Activated T-helper 1 cell treated with anti-CD3 and anti-CD28 coated beads, Interleukin-12 subunit alpha, Interleukin-12 subunit beta, Interleukin-2, Interleukin-4 antibody, amounts not matched to agents 30 ng/mL and 10 ng/mL and 1 ng/mL, durations not matched to agents 14 hours and 24 hours and 36 hours (primary cell): ENCODE measurements at regions of chr12 and their contacts with region 1.

Region 1: DNA sequence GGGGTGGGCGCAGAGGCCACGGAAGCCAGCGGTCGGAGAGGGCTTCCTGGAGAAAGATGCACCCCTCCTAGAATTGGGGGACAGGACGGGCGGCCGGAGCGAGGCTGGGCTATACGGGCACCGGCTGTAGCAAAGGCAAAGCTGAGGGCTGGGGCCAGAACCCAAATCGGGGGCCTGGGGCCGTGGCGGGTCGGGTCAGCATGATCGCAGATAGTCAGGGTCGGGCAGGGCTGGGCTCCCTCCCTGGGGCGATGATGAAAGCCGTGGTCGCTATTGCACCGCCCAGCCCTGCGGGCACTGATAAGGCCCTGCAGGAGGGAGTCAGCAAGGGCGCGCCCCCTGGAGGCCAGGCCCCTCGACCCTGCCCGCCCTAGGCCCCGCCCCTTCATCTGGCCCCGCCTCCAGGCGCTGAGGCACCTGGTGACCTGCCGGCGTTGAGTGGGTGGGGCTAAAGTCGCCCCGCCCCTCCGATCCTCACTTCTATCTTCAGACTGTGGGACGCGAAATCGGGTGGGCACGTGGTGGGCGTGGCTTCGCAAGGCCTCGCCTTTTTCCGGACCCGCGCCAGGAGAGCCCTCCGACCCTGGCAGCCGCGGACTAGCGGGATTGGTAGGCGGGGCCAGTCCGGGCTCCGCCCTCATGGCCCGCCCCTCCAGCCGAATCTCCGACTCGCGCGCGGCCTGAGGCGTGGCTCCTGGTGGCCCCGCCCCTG is 418 bp upstream of the SH2B3 start:
- DNase-seq: peak; percentile 95
- H3K4me3 Mint-ChIP-seq: peak overlapping the region; percentile 93
- H3K27ac Mint-ChIP-seq: peak overlapping the region; percentile 99
- H3K4me1 Mint-ChIP-seq: peaks cover 44% of the 10 kb centered on the region
- H3K27me3 Mint-ChIP-seq: peaks cover 10% of the 10 kb centered on the region

Region 2: GRCh38 chr12:110583137-110584059 is 821.9 kb before region 1 on chr12 and contains the start of gene PPTC7:
- intact Hi-C with region 1: loop called (anchors 10 kb)
- DNase-seq: peak; percentile 93
- H3K4me3 Mint-ChIP-seq: peak within 1 kb of the TSS; percentile 95
- H3K27ac Mint-ChIP-seq: peak within 1 kb of the TSS; percentile 96
- H3K4me1 Mint-ChIP-seq: peaks cover 61% of the 10 kb centered on the region
- H3K27me3 Mint-ChIP-seq: peaks cover 3% of the 10 kb centered on the region
- total RNA-seq, gene PPTC7: 57.9 and 59.1 TPM in 2 replicates

Region 3: GRCh38 chr12:111368788-111369495 is 36.4 kb before region 1 on chr12 and contains the start of gene PHETA1:
- intact Hi-C with region 1: loop called (anchors 2 kb)
- DNase-seq: peak; percentile 79
- H3K4me3 Mint-ChIP-seq: peak within 1 kb of the TSS; percentile 80
- H3K27ac Mint-ChIP-seq: no peak within 1 kb of the TSS
- H3K4me1 Mint-ChIP-seq: peaks cover 17% of the 10 kb centered on the region
- H3K27me3 Mint-ChIP-seq: peaks cover 18% of the 10 kb centered on the region
- total RNA-seq, gene PHETA1: 2.7 and 4.2 TPM in 2 replicates

Region 4: GRCh38 chr12:111451649-111452129 is 46.4 kb after region 1 on chr12:
- intact Hi-C with region 1: loop called (anchors 1 kb)
- DNase-seq: peak; percentile 21
- H3K4me3 Mint-ChIP-seq: peak overlapping the region; percentile 15
- H3K27ac Mint-ChIP-seq: no peak overlapping the region
- H3K4me1 Mint-ChIP-seq: peaks cover 50% of the 10 kb centered on the region
- H3K27me3 Mint-ChIP-seq: no peaks in the 10 kb centered on the region

Region 5: GRCh38 chr12:111599459-111600204 is 194.3 kb after region 1 on chr12:
- intact Hi-C with region 1: loop called (anchors 2 kb)
- DNase-seq: peak; percentile 80
- H3K4me3 Mint-ChIP-seq: peak overlapping the region; percentile 79
- H3K27ac Mint-ChIP-seq: peak overlapping the region; percentile 68
- H3K4me1 Mint-ChIP-seq: peaks cover 29% of the 10 kb centered on the region
- H3K27me3 Mint-ChIP-seq: no peaks in the 10 kb centered on the region

Region 6: GRCh38 chr12:112382232-112382796 is 977.0 kb after region 1 on chr12 and contains the start of gene HECTD4:
- intact Hi-C with region 1: loop called (anchors 10 kb)
- DNase-seq: peak; percentile 92
- H3K4me3 Mint-ChIP-seq: peak within 1 kb of the TSS; percentile 95
- H3K27ac Mint-ChIP-seq: peak within 1 kb of the TSS; percentile 91
- H3K4me1 Mint-ChIP-seq: peaks cover 31% of the 10 kb centered on the region
- H3K27me3 Mint-ChIP-seq: peaks cover under 1% of the 10 kb centered on the region
- total RNA-seq, gene HECTD4: 32.3 and 36.9 TPM in 2 replicates